ENCODE measurements at regions of chr14 and their contacts with region 1.

Region 1: DNA sequence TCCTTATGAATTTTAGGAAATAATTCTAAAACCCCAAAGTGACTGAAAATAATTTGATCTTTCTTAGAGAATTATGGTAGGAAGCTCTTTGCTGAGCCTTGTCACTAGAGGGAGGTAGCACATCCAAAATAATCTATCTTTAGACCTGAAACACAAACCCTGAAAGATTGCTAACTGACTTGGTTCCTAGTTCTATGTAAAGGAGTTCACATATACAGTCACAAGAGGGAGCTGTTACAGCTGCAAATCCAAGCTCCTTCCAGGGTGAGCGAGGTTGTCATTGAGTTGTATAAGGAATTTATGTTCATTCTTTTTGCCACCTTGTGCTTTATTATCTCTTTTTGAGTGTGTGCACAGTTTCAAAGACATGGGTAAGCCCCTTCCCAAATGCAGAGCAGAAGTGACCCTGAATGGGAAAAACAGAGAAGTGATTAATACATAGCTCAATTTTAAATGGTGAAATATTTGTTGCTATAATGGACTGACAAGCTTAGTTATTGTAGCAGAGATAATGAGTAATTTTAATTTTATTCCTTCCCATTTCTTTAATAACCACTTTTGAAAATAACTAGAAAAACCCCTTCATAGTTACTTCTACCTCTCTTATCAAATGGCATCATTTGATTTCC is 387.9 kb downstream of the DAD1 start:
- DNase-seq: no peak
- H3K4me3 ChIP-seq: no peak overlapping the region
- CTCF ChIP-seq: peak; percentile 73

Region 2: GRCh38 chr14:22177870-22178269 is 23.2 kb before region 1 on chr14:
- CTCF ChIA-PET with region 1: interaction called, 71 read pairs
- POLR2A ChIA-PET with region 1: no interaction called
- DNase-seq: no peak
- H3K4me3 ChIP-seq: no peak overlapping the region
- CTCF ChIP-seq: no peak

Region 3: GRCh38 chr14:22213120-22213519 is 12.0 kb after region 1 on chr14:
- CTCF ChIA-PET with region 1: interaction called, 69 read pairs
- POLR2A ChIA-PET with region 1: no interaction called
- DNase-seq: no peak
- H3K4me3 ChIP-seq: no peak overlapping the region
- CTCF ChIP-seq: no peak

Region 4: GRCh38 chr14:22265319-22266137 is 64.4 kb after region 1 on chr14:
- CTCF ChIA-PET with region 1: interaction called, 11 read pairs
- POLR2A ChIA-PET with region 1: no interaction called
- DNase-seq: no peak
- H3K4me3 ChIP-seq: no peak overlapping the region
- CTCF ChIP-seq: no peak

Region 5: GRCh38 chr14:22375321-22375930 is 174.3 kb after region 1 on chr14:
- CTCF ChIA-PET with region 1: interaction called, 45 read pairs
- POLR2A ChIA-PET with region 1: no interaction called
- DNase-seq: no peak
- H3K4me3 ChIP-seq: no peak overlapping the region
- CTCF ChIP-seq: peak; percentile 39